ENCODE measurements at regions of chr1 and their contacts with region 1.

Region 1: DNA sequence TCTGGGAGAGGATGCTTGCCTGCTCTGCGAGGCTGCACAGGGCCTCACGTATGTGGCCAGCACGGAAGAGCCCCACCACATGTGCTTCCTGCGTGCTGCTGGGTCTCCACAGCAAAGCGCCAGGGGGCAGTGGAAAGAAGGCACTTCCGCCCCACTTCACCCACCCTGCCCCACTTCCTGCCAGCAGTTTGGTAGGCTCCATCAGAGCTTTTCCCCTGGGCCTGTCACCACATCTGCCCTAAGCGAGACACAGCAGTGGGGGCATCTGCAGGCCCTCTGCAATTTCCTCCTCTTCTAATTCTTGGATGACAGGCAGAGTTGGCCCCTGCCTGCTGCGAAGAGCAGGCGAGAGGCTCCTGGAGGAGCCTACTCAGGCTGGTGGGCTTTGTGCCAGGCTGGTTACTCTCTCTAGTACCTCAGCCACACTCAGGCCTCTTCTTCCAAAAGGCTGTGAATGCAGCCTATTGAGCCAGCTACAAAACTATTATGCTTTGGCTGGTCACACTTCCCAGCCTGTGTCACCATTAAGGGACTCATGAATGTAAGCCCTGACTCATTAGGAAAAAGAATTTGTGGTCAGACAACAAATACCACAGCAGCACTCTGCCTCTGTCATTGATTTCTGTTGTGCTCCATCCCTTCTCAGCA is 25.0 kb downstream of the CD244 start:
- DNase-seq: no peak
- ATAC-seq: no peak
- H3K4me3 ChIP-seq: no peak overlapping the region
- H3K27ac ChIP-seq: no peak overlapping the region
- H3K4me1 ChIP-seq: no peaks in the 10 kb centered on the region
- H3K27me3 ChIP-seq: no peaks in the 10 kb centered on the region; a peak in 2 of 5 replicates
- CTCF ChIP-seq: no peak
- EP300 ChIP-seq: no peak
- POLR2A ChIP-seq: no peak
- RAD21 ChIP-seq: no peak

Region 2: DNA sequence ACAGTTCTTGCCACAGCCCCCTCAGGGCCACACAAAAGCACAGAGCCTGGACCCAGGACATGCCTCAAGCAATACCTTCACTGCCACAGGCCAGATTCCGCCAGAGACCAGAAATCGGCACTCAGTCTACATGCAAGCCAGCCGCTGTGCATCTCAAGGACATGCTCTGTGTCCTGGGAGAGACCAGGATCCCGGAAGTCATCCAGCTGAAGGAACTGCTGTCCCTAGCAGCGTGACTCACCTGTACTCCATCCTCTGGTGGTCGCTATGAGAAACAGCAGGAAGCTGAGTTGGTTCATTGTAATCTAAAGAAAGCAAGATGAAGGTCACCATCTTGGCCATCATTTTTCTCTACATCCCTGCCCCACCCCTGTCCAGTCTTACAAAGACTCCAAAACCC is 46.9 kb after region 1 on chr1:
- CTCF ChIA-PET with region 1: interaction called, 3 read pairs
- POLR2A ChIA-PET with region 1: no interaction called
- in situ Hi-C with region 1: loop called (anchors 10 kb)
- intact Hi-C with region 1: loop called (anchors 2 kb)
- DNase-seq: peak; percentile 15
- ATAC-seq: peak; percentile 85
- H3K4me3 ChIP-seq: no peak overlapping the region
- H3K27ac ChIP-seq: no peak overlapping the region
- H3K4me1 ChIP-seq: no peaks in the 10 kb centered on the region
- H3K27me3 ChIP-seq: no peaks in the 10 kb centered on the region; a peak in 2 of 5 replicates
- CTCF ChIP-seq: peak; percentile 47
- EP300 ChIP-seq: no peak
- POLR2A ChIP-seq: no peak
- RAD21 ChIP-seq: no peak

Region 3: GRCh38 chr1:160951443-160952128 is 113.9 kb after region 1 on chr1:
- CTCF ChIA-PET with region 1: interaction called, 18 read pairs
- POLR2A ChIA-PET with region 1: no interaction called
- in situ Hi-C with region 1: loop called (anchors 5 kb)
- intact Hi-C with region 1: loop called (anchors 1 kb)
- DNase-seq: peak; percentile 35
- ATAC-seq: peak; percentile 88
- H3K4me3 ChIP-seq: no peak overlapping the region
- H3K27ac ChIP-seq: no peak overlapping the region
- H3K4me1 ChIP-seq: peaks cover 28% of the 10 kb centered on the region
- H3K27me3 ChIP-seq: peaks cover 1 to 4% of the 10 kb centered on the region in 2 experiments; a peak in 1 of 5 replicates
- CTCF ChIP-seq: peak; percentile 85
- EP300 ChIP-seq: no peak
- POLR2A ChIP-seq: no peak
- RAD21 ChIP-seq: peak; percentile 52; the same call in 1 of the 2 replicates

Measured in HepG2 (cell line).